H1 (cell line): ENCODE measurements at regions of chr11 and their contacts with region 1.

Region 1: GRCh38 chr11:2428322-2428795 is 16.0 kb downstream of the TRPM5 start:
- DNase-seq: peak in 1 of 2 experiments; percentile 93
- H3K4me3 ChIP-seq: no peak overlapping the region
- H3K27ac ChIP-seq: no peak overlapping the region
- H3K4me1 ChIP-seq: no peaks in the 10 kb centered on the region
- H3K27me3 ChIP-seq: peaks cover 0 to 10% (median 0%) of the 10 kb centered on the region in 4 experiments; a peak in 1 of 7 replicates
- CTCF ChIP-seq: peak in 2 of 3 experiments; percentile 94 to 97; a peak in 3 of 4 replicates
- EP300 ChIP-seq: no peak
- POLR2A ChIP-seq: no peak
- RAD21 ChIP-seq: peak; percentile 99

Region 2: DNA sequence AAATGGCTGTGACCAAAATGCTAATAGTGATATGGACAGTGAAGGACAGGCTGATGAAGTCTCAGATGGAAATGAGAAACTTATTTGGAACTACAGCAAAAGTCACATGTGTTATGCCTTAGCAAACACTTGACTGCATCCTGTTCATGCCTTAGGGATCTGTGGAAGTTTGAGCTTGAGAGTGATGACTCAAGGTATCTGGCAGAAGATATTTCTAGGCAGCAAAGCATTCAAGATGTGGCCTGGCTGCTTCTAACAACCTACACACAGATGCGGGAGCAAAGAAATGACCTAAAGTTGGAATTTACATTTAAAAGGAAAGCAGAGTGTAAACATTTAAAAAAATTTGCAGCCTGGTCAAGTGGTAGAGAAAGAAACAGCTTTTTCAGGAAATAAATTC is 79.4 kb before region 1 on chr11:
- CTCF ChIA-PET with region 1: no interaction called
- POLR2A ChIA-PET with region 1: no interaction called
- DNase-seq: no peak
- H3K4me3 ChIP-seq: no peak overlapping the region
- H3K27ac ChIP-seq: no peak overlapping the region
- H3K4me1 ChIP-seq: no peaks in the 10 kb centered on the region
- H3K27me3 ChIP-seq: no peaks in the 10 kb centered on the region
- CTCF ChIP-seq: no peak
- EP300 ChIP-seq: no peak
- POLR2A ChIP-seq: no peak
- RAD21 ChIP-seq: no peak

Region 3: GRCh38 chr11:2452321-2453012 is 24.1 kb after region 1 on chr11:
- CTCF ChIA-PET with region 1: interaction called, 10 read pairs
- POLR2A ChIA-PET with region 1: no interaction called
- DNase-seq: no peak
- H3K4me3 ChIP-seq: no peak overlapping the region
- H3K27ac ChIP-seq: no peak overlapping the region
- H3K4me1 ChIP-seq: no peaks in the 10 kb centered on the region
- H3K27me3 ChIP-seq: peaks cover 8 to 54% (median 28%) of the 10 kb centered on the region in 4 experiments
- CTCF ChIP-seq: no peak
- EP300 ChIP-seq: no peak
- POLR2A ChIP-seq: no peak
- RAD21 ChIP-seq: no peak

Region 4: GRCh38 chr11:2586087-2586792 is 157.9 kb after region 1 on chr11:
- CTCF ChIA-PET with region 1: no interaction called
- POLR2A ChIA-PET with region 1: no interaction called
- DNase-seq: no peak
- H3K4me3 ChIP-seq: no peak overlapping the region
- H3K27ac ChIP-seq: no peak overlapping the region
- H3K4me1 ChIP-seq: no peaks in the 10 kb centered on the region
- H3K27me3 ChIP-seq: peaks cover 26 to 87% (median 64%) of the 10 kb centered on the region in 4 experiments
- CTCF ChIP-seq: no peak
- EP300 ChIP-seq: no peak
- POLR2A ChIP-seq: no peak
- RAD21 ChIP-seq: no peak

Region 5: DNA sequence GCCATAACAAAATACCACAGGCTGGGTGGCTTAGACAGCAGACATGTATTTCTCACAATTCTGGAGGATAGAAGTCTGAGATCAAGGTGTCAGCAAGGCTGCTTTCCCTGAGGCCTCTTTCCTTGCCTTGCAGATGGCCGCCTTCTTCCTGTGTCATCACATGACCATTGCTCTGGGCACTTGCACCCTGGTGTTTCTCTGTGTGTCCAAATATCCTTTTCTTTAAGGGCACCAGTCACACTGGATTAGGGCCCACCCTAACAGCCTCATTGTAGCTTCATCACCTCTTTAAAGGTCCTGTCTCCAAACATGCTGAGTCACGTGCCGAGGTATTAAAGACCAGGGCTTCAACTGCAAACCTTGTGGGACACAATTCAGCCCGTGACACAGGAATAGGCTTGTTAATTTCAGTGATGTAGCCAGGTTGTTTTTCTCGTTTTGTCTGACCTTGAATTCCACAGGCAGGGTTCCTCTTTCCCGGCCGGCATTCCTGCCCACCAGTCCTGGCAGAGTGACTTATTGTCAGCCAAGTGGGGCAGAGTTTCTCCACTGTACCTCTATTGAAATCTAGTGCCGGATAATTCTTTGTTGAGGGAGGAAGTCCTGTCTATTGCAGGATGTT is 171.3 kb after region 1 on chr11:
- CTCF ChIA-PET with region 1: no interaction called
- POLR2A ChIA-PET with region 1: no interaction called
- DNase-seq: no peak
- H3K4me3 ChIP-seq: no peak overlapping the region
- H3K27ac ChIP-seq: no peak overlapping the region
- H3K4me1 ChIP-seq: no peaks in the 10 kb centered on the region
- H3K27me3 ChIP-seq: peaks cover 33 to 74% (median 61%) of the 10 kb centered on the region in 4 experiments
- CTCF ChIP-seq: no peak
- EP300 ChIP-seq: no peak
- POLR2A ChIP-seq: no peak
- RAD21 ChIP-seq: no peak